ENCODE measurements at regions of chr18 and their contacts with region 1.

Region 1: GRCh38 chr18:52339891-52340371 is at the start of gene DCC:
- DNase-seq: peak; percentile 70 to 92 (median 84)

Region 2: GRCh38 chr18:51668101-51668500 is 671.8 kb before region 1 on chr18:
- intact Hi-C with region 1: loop called (anchors 5 kb)
- DNase-seq: peak; percentile 46 to 91 (median 80)

Region 3: DNA sequence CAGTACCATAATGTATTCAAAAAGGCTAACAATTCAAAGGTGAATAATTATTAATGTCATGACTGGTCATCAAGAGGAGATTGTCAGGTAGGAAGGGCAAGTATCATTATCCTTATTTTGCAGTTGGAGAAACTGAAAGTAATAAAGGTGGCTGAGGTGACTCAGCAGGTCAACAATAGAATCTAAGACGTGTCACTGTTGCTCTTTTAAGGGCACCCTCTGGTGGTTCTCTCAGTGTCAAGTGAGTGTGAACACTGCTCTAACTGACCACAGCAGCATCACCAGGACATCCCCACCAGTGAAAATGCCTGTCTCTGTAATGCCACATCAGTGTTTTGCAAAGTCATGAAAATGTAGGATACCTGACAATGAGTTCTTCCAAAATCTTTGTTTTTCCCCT is 69.8 kb after region 1 on chr18:
- intact Hi-C with region 1: loop called (anchors 5 kb)
- DNase-seq: peak in 15 of 42 donors; percentile 21 to 75 (median 37)

Region 4: DNA sequence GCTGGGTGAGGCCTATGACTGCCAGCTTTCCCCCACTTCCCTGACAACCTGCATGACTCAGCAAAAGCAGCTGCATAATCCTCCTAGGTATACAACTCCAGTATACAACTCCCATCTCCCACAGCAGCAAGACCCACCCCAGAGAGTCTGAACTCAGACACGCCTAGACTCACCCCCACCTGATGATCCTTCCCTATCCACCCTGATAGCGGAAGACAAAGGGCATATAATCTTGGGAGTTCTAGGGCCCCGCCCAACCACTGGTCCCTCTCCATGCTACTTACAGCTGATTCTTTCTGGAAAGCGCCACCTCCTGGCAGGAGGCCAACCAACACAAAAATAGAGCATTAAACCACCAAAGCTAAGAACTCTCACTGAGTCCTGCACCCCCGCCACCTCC is 296.6 kb after region 1 on chr18:
- intact Hi-C with region 1: no loop called
- DNase-seq: no peak

Region 5: GRCh38 chr18:52670896-52671295 is 331.0 kb after region 1 on chr18:
- intact Hi-C with region 1: loop called (anchors 5 kb)
- DNase-seq: peak in 4 of 42 donors; percentile 8 to 48 (median 34)

Region 6: GRCh38 chr18:52903857-52904256 is 563.9 kb after region 1 on chr18:
- intact Hi-C with region 1: loop called (anchors 10 kb)
- DNase-seq: peak in 41 of 42 donors; percentile 26 to 88 (median 71)